ENCODE measurements at regions of chr15 and their contacts with region 1.

Region 1: GRCh38 chr15:84658080-84658787 is at the start of gene NMB:
- DNase-seq: peak; percentile 88
- ATAC-seq: peak; percentile 65
- total RNA-seq, gene NMB: 3.9 TPM

Region 2: GRCh38 chr15:84600851-84601838 is 57.1 kb before region 1 on chr15 and contains the start of gene ZSCAN2:
- intact Hi-C with region 1: loop called (anchors 2 kb)
- DNase-seq: peak; percentile 97
- ATAC-seq: peak; percentile 98
- total RNA-seq, gene ZSCAN2: 5.7 TPM

Region 3: DNA sequence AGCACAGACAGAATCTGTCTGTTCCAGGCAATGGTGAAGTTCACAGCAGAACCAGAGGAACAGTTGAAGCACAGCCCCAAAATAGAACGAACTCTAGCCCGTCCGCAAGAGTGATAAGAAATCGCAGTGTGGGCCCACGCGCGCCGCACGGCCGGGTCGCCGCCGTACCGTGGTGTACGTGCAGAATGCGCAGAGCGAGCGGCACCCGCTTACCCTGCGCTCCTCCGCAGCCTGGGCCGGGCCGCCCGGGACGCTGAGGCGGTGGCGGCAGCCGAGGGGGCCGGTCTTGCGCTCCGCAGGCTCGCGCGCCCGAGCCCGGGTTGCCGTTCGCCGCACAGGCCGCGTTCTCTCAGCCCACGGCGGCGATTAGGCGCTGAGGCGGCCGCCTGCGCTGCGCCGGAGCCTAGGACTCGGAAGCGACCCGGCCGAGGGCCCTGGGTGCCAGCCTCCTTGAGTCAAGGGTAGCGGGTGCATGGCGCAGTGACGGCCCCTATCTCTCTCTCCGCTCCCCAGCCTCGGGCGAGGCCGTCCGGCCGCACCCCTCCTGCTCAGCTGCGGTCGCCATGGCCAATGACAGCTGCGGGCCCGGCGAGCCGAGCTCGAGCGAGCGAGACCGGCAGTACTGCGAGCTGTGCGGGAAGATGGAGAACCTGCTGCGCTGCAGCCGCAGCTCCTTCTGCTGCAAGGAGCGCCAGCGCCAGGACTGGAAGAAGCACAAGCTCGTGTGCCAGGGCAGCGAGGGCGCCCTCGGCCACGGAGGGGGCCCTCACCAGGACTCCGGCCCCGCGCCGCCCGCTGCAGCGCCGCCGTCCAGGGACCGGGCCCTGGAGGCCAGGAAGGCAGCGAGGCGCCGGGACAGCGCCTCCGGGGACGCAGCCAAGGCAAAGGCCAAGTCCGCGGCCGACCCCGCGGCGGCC is 24.7 kb before region 1 on chr15:
- intact Hi-C with region 1: loop called (anchors 2 kb)
- DNase-seq: peak; percentile 91
- ATAC-seq: peak; percentile 79

Region 4: GRCh38 chr15:84702961-84703482 is 44.8 kb after region 1 on chr15:
- intact Hi-C with region 1: loop called (anchors 5 kb)
- DNase-seq: no peak
- ATAC-seq: peak; percentile 85

Region 5: GRCh38 chr15:84716036-84716799 is 58.0 kb after region 1 on chr15 and contains the start of gene SEC11A:
- intact Hi-C with region 1: loop called (anchors 5 kb)
- DNase-seq: peak; percentile 98
- ATAC-seq: peak; percentile 99
- total RNA-seq, gene SEC11A: 84.7 TPM

Region 6: DNA sequence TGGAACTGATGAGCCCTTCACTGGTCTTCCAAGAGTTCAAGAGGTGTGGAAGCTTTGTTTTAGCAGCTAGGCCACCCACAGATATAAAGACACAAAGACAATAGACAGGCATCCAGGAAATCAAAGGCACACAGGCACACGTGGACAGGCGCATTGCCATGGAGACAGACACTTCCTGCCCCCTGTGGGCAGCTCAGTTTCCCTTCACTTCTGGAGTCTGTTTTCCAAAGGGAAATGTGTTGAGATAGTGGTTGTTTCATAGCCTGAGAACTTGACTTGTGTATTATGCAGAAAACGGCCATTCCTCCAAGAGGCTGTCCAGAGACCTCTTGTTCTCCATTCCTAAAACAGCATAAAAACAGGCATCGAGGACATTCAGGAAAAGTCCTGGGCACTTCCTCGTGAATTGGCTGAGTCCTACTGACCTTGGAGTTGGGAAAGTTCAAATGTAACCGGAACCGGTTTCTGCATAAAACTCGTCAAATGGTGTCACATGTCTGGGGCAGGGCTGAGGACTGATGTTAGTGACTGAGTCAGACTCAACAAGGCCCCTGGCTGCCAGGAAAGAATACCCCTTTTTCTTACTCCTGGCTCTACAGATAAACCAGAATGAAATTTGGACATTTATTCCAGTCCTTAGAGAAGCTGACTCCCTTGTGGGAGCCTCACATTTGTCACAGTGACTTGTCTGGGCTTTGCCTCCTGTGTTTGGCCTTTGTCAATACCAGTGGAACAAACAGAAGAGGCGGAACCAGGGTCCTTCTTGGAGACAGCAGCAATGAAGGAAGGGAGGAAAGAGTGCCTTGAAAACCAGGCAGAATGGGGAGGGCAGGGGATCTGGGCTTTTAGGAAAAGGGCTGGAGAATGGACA is 160.3 kb after region 1 on chr15:
- intact Hi-C with region 1: loop called (anchors 5 kb)
- DNase-seq: no peak
- ATAC-seq: no peak

Measured in Right ventricle myocardium inferior (tissue), 1 donor.